ENCODE measurements at regions of chr12 and their contacts with region 1.

Region 1: GRCh38 chr12:49358483-49359141 is 8.7 kb upstream of the SPATS2 start:
- DNase-seq: peak; percentile 80
- ATAC-seq: peak; percentile 98
- H3K4me3 Mint-ChIP-seq: no peak overlapping the region
- H3K27ac Mint-ChIP-seq: no peak overlapping the region
- H3K4me1 Mint-ChIP-seq: peaks cover 2% of the 10 kb centered on the region
- H3K27me3 Mint-ChIP-seq: peaks cover 12% of the 10 kb centered on the region
- CTCF ChIP-seq: peak; percentile 90

Region 2: DNA sequence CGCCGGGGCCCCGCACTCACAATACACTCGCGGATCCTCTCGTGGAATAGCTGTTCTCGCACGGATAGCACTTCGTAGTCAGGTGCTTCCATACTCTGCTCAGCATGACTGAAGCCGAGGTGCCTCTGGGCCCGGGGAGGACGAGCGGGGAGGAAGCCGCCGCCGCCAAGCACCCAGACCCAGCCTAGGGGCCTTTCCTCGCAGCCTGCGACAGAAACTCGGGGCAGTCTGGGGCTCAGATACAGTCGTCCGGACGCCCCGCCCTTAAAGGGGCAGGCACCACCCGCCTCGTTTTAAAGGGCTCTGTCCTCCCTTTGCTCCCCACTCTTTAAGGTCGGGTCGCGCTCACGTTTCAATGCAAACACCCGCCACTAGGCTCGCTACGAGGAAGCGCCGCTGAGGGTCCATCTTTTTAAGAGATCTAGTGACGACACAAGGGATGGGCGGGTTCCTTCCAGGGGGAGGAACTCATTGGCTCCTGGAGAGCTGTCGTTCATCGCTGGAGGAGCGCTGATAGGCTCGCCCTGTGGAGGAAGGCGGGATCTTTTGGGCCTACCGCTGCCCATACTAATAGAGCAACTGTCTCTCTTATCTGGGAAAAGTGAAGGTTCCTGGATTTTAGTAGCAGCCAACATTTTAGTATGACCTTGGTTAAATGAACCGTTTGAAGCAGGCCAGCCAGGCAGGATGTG is 248.0 kb before region 1 on chr12 and contains the start of gene LMBR1L:
- CTCF ChIA-PET with region 1: no interaction called
- POLR2A ChIA-PET with region 1: no interaction called
- intact Hi-C with region 1: no loop called
- DNase-seq: peak; percentile 99
- ATAC-seq: peak; percentile 99
- H3K4me3 Mint-ChIP-seq: peak within 1 kb of the TSS; percentile 87
- H3K27ac Mint-ChIP-seq: peak within 1 kb of the TSS; percentile 97
- H3K4me1 Mint-ChIP-seq: peaks cover 35% of the 10 kb centered on the region
- H3K27me3 Mint-ChIP-seq: no peaks in the 10 kb centered on the region
- CTCF ChIP-seq: peak; percentile 50
- total RNA-seq, gene LMBR1L: 43.5 to 50.9 TPM

Region 3: GRCh38 chr12:49188914-49189367 is 169.7 kb before region 1 on chr12 and contains the start of gene TUBA1A:
- CTCF ChIA-PET with region 1: no interaction called
- POLR2A ChIA-PET with region 1: no interaction called
- intact Hi-C with region 1: no loop called
- DNase-seq: peak; percentile 99
- ATAC-seq: peak; percentile 92
- H3K4me3 Mint-ChIP-seq: peak within 1 kb of the TSS; percentile 95
- H3K27ac Mint-ChIP-seq: peak within 1 kb of the TSS; percentile 97
- H3K4me1 Mint-ChIP-seq: peaks cover 16% of the 10 kb centered on the region
- H3K27me3 Mint-ChIP-seq: no peaks in the 10 kb centered on the region
- CTCF ChIP-seq: no peak
- total RNA-seq, gene TUBA1A: 70.6 to 71.2 TPM

Region 4: GRCh38 chr12:49322708-49323523 is 35.7 kb before region 1 on chr12 and contains the start of gene TROAP:
- CTCF ChIA-PET with region 1: interaction called, 12 read pairs
- POLR2A ChIA-PET with region 1: no interaction called
- intact Hi-C with region 1: no loop called
- DNase-seq: peak; percentile 98
- ATAC-seq: peak; percentile 96
- H3K4me3 Mint-ChIP-seq: peak within 1 kb of the TSS; percentile 100
- H3K27ac Mint-ChIP-seq: peak within 1 kb of the TSS; percentile 92
- H3K4me1 Mint-ChIP-seq: peaks cover 10% of the 10 kb centered on the region
- H3K27me3 Mint-ChIP-seq: no peaks in the 10 kb centered on the region
- CTCF ChIP-seq: no peak
- total RNA-seq, gene TROAP: 46.6 to 52.6 TPM

Region 5: DNA sequence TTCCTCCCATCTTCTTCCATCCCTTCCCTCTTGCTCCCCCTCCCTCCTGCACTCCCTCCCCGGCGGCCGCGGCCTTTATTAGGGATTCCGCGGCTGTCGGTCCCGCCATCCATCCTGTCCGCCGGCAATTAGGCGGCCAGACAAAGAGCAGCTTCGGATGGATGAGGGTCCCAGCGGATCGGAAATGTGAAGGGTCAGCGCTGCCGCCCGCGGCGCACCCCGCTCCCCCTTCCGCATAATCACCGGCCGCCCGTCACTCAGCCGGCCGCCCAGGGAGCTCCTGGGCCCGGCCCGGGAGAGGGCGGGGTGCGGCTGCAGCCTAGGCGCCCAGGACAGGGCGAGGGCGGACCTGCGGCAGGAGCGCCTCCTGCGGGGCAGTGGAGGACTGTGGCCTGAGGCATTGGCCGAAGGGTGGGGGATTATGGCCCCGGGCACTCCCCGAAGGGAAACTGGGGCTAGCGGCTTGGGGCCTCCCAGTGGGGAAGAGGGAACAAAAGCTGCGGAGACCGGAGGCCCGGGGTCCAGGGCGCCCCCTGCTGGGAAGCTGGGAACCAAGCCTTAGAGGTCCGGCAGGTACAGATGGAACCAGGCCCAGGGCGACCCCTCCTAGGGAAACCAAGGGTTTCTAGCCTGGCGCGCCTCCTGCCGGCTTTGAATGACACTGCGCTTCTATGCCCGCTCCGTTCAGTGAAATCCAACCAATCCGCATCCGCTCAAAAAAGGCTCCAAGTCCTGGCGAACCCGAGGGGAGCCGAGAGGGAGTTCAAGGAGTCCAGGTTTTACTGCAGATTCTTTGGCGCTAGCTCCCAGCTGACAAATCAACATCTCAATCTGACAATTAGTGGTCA is 16.3 kb before region 1 on chr12:
- CTCF ChIA-PET with region 1: interaction called, 114 read pairs
- POLR2A ChIA-PET with region 1: no interaction called
- intact Hi-C with region 1: no loop called
- DNase-seq: peak; percentile 93
- ATAC-seq: peak; percentile 84
- H3K4me3 Mint-ChIP-seq: peak overlapping the region; percentile 53
- H3K27ac Mint-ChIP-seq: no peak overlapping the region
- H3K4me1 Mint-ChIP-seq: peaks cover 40% of the 10 kb centered on the region
- H3K27me3 Mint-ChIP-seq: peaks cover 69% of the 10 kb centered on the region
- CTCF ChIP-seq: peak; percentile 99

Region 6: GRCh38 chr12:49400304-49400703 is 41.7 kb after region 1 on chr12:
- CTCF ChIA-PET with region 1: interaction called, 15 read pairs
- POLR2A ChIA-PET with region 1: no interaction called
- intact Hi-C with region 1: no loop called
- DNase-seq: no peak
- ATAC-seq: no peak
- H3K4me3 Mint-ChIP-seq: no peak overlapping the region
- H3K27ac Mint-ChIP-seq: no peak overlapping the region
- H3K4me1 Mint-ChIP-seq: peaks cover 5% of the 10 kb centered on the region
- H3K27me3 Mint-ChIP-seq: no peaks in the 10 kb centered on the region
- CTCF ChIP-seq: no peak

Region 7: DNA sequence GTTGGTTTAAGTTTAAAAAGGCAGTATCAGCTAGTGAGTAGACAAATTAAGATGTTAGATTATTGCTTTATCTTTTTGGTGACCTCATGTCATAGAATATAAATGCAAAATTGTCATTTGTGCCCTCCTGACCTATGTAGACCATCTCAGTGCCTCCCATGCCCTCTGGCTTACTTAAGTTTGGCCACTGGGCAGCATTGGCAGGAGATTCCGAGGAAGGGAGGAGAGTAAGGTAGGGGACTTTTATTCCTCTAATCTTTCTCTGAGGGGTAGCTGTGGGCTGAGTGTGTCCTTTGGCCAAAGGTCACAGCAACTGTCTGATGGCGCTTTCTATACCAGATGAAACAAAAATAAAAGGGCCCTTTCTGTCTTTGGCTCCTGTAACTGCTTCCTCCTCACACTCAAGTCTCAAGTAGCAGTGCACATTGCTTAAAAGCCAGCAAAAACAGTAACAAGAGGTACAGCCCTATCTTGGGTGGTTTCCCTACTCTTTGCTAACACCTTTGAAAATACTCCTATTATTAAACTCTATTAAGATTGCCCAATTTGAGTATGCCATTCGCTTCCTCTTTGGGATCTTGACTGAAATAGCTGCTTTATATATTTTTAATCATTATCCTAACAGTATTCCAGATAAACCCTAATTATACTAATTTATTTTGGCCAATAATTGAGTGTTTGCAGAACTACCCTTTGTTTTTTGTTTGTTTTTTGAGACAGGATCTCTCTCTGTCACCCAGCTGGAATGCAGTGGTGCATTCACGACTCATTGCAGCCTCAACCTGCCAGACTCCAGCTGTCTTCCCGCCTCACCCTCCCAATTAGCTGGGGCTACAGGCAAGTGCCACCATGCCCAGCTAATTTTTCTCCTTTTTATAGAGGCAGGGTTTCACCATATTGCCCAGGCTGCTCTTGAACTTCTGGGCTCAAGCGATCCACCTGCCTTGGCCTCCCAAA is 123.8 kb after region 1 on chr12:
- CTCF ChIA-PET with region 1: interaction called, 28 read pairs
- POLR2A ChIA-PET with region 1: no interaction called
- intact Hi-C with region 1: no loop called
- DNase-seq: no peak
- ATAC-seq: no peak
- H3K4me3 Mint-ChIP-seq: no peak overlapping the region
- H3K27ac Mint-ChIP-seq: no peak overlapping the region
- H3K4me1 Mint-ChIP-seq: peaks cover 3% of the 10 kb centered on the region
- H3K27me3 Mint-ChIP-seq: no peaks in the 10 kb centered on the region
- CTCF ChIP-seq: no peak

Region 8: DNA sequence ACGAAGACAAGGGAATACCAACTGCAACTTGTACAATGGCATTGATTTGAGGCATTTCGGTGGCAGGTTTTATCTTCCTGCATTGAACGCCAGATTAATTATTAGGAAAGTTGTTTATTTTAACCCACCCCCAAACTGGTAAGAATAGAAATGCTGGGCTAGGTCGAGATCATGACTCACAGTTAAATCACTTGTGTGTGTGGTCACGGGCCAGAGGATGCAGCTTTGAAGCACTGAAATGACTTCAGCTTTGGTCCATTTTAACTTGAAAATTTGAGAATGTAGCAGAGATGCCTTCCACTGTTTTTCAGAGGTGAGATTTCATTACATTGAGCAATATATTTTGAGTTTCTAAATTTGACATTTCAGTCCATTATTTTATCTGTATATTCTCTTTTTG is 156.7 kb after region 1 on chr12:
- CTCF ChIA-PET with region 1: interaction called, 366 read pairs
- POLR2A ChIA-PET with region 1: no interaction called
- intact Hi-C with region 1: loop called (anchors 1 kb)
- DNase-seq: no peak
- ATAC-seq: no peak
- H3K4me3 Mint-ChIP-seq: no peak overlapping the region
- H3K27ac Mint-ChIP-seq: no peak overlapping the region
- H3K4me1 Mint-ChIP-seq: peaks cover 10% of the 10 kb centered on the region
- H3K27me3 Mint-ChIP-seq: no peaks in the 10 kb centered on the region
- CTCF ChIP-seq: no peak

Region 9: GRCh38 chr12:49580572-49581535 is 222.2 kb after region 1 on chr12:
- CTCF ChIA-PET with region 1: interaction called, 65 read pairs
- POLR2A ChIA-PET with region 1: no interaction called
- intact Hi-C with region 1: no loop called
- DNase-seq: peak; percentile 76
- ATAC-seq: peak; percentile 90
- H3K4me3 Mint-ChIP-seq: no peak overlapping the region
- H3K27ac Mint-ChIP-seq: peak overlapping the region; percentile 7
- H3K4me1 Mint-ChIP-seq: peaks cover 15% of the 10 kb centered on the region
- H3K27me3 Mint-ChIP-seq: no peaks in the 10 kb centered on the region
- CTCF ChIP-seq: peak; percentile 77